ENCODE measurements at regions of chr10 and their contacts with region 1.

Region 1: DNA sequence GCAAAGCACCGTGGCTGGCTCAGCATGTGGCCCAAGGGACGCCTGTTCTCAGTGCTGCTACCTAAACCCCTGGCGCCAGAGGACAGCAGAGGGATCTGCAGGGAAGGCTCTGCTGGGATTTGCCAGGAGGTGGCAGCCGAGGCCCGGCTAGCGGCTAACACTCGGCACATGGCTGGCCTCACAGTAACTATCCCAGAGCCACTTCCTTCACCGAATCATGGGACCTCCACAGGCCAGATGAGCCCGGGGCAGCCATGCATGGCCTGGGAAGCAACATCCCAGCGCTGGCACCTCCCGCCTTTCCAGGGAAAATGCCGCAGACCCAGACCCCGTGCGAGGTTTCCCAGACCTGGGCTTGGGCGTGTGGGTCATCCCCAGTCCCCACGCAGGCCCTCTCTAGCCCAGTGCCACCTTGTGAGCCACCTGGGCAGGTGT is 36.4 kb downstream of the DPYSL4 start:
- DNase-seq: peak; percentile 83
- H3K4me3 Mint-ChIP-seq: no peak overlapping the region
- H3K27ac Mint-ChIP-seq: no peak overlapping the region
- H3K4me1 Mint-ChIP-seq: no peaks in the 10 kb centered on the region
- H3K27me3 Mint-ChIP-seq: no peaks in the 10 kb centered on the region

Region 2: GRCh38 chr10:132351611-132352010 is 128.4 kb after region 1 on chr10:
- CTCF ChIA-PET with region 1: interaction called, 4 read pairs
- POLR2A ChIA-PET with region 1: no interaction called
- intact Hi-C with region 1: loop called (anchors 1 kb)
- DNase-seq: no peak
- H3K4me3 Mint-ChIP-seq: no peak overlapping the region
- H3K27ac Mint-ChIP-seq: no peak overlapping the region
- H3K4me1 Mint-ChIP-seq: no peaks in the 10 kb centered on the region
- H3K27me3 Mint-ChIP-seq: no peaks in the 10 kb centered on the region

Region 3: DNA sequence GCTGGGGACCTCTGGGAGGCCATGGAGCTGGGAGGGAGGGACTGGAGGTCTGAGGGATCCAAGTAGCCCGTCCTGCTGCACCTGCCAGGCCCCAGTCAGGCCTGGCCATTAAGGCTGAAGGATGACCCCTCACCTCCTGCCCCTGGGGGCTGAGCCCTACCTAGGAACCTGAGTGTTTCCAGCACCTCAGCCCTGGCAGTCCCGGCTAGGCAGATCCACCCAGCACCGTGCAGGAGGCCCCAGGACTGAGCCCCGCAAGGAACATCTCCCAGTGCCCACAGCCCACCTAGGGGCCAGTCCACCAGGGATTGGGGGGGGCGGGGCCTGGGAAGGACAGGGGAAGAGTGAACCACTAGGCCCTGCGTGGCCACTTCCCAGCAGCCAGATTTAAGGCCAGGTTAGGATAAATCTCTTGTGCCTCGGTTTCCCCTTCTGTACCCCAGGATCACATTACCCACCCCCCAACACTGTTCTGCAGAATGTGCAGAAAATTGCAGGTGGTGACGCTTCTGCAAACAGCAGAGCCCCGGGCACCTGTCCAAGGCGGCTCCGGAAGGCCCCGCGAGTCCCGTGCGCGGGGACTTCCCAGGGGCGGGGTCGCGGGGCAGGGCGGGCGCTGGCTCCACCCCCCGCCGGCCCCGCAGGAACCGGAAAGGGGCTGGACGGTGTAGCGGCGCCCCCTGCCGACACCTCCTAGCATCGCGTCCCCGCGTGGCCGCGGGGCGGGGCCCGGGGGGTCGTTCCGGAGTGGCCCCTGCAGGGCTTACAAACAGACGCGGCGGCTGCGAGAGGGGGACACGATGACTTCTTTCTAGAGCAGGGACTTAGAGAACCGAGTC is 229.7 kb after region 1 on chr10:
- CTCF ChIA-PET with region 1: no interaction called
- POLR2A ChIA-PET with region 1: no interaction called
- intact Hi-C with region 1: loop called (anchors 1 kb)
- DNase-seq: peak; percentile 91
- H3K4me3 Mint-ChIP-seq: peak overlapping the region; percentile 48
- H3K27ac Mint-ChIP-seq: peak overlapping the region; percentile 73
- H3K4me1 Mint-ChIP-seq: peaks cover 18% of the 10 kb centered on the region
- H3K27me3 Mint-ChIP-seq: no peaks in the 10 kb centered on the region

Measured in activated CD4-positive, alpha-beta memory T cell treated with anti-CD3 and anti-CD28 coated beads for 36 hours (primary cell).